AG04449 (cell line): ENCODE measurements at regions of chr3 and their contacts with region 1.

Region 1: GRCh38 chr3:172666873-172667694 is 43.8 kb downstream of the NCEH1 start:
- DNase-seq: no peak
- H3K4me3 ChIP-seq: no peak overlapping the region
- CTCF ChIP-seq: peak; percentile 71

Region 2: DNA sequence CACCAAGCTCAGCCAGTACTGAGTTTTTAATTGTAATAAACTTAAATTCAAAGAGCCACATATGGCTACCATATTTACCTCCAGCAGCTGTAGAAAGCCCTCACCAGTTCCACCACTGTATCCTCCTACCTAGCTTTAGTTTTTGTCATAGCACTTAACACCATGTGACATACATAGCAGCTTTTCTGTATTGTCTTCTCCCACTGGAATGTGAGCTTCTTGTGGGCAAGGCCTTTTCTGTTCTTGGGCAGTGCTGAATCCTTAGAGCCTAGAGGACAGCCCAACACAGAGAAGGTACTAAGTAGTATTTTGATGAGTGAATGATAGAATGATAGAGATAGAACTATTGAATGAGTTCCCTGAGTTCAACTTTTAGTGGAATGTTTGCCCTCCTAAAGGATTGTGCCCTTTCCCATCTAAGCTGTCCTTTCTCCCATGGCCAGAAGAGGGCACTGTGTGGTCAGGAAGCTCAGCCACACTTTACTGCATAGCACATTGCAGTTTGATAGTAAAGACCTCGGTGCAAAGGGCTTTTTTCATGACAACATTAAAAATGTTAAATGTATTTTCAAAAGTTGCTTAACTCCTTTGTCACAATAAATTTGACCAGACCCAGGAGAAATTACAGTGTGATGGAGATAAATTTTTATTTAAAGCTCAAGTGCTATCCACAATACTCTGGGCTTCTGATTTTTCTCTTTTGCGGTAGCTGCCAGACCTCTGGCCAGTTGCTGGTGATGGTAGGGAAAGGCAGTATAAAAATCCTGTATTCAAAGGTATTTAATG is 334.6 kb before region 1 on chr3:
- CTCF ChIA-PET with region 1: interaction called, 35 read pairs
- POLR2A ChIA-PET with region 1: no interaction called
- DNase-seq: no peak
- H3K4me3 ChIP-seq: no peak overlapping the region
- CTCF ChIP-seq: peak; percentile 89

Region 3: GRCh38 chr3:172355839-172356238 is 311.2 kb before region 1 on chr3:
- CTCF ChIA-PET with region 1: interaction called, 23 read pairs
- POLR2A ChIA-PET with region 1: no interaction called
- DNase-seq: peak; percentile 76
- H3K4me3 ChIP-seq: no peak overlapping the region
- CTCF ChIP-seq: no peak

Region 4: DNA sequence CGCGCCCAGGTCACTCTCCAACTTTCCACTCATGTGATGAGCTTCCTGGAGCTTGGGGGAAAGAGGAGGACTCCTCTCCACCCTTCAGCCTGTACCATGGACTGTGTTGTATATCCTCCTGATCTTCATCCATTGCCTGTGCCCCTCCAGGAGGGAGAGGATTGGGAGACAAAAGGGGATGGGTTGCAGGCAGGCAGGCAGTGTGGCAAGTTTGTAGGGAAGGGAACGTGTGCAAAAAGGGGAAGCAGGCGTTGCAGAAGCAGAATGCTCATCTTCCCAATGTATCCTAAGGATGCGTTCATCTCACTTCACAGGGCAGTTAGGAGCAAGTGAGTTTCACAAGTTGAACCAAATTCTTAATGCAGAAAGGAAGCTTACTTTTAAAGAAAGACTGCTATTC is 190.7 kb before region 1 on chr3:
- CTCF ChIA-PET with region 1: interaction called, 12 read pairs
- POLR2A ChIA-PET with region 1: no interaction called
- DNase-seq: no peak
- H3K4me3 ChIP-seq: no peak overlapping the region
- CTCF ChIP-seq: no peak

Region 5: DNA sequence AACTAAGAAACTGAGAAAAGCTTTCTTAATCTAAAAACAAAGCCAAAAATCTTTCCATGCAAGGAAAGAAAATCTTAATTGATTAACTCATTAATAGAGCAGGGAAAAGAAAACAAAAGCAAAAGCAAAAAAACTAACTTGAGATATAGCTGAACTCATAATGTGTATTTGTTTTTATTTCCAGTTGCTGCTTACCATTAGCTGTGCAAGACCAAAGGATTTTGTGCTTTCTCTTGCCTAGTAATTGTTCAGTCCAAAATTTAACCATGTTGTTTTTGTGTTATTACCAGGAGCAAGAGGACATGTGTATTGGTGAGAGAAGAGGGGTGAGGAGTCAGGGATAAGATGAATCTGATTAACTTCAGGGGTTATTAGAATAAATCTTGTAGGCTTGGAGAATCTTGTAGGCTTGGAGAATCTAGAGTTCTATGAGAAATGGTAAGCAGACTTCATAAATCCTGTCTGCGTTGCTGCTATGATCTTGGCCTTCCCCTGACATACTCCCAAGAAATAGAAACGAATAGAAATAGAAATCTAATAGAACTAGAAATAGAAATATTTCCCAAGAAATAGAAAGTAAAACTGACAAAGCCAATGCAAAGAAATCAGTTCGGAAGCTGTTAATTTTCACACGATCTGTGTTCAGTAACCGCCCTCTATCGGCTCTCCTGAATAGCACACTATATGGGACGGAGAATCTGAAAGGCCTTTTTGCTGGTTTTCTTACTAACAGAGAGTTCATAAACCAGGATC is 71.3 kb before region 1 on chr3:
- CTCF ChIA-PET with region 1: interaction called, 20 read pairs
- POLR2A ChIA-PET with region 1: no interaction called
- DNase-seq: no peak
- H3K4me3 ChIP-seq: no peak overlapping the region; the same call in 1 of the 2 replicates
- CTCF ChIP-seq: peak; percentile 62

Region 6: GRCh38 chr3:172635588-172635987 is 31.5 kb before region 1 on chr3:
- CTCF ChIA-PET with region 1: interaction called, 16 read pairs
- POLR2A ChIA-PET with region 1: no interaction called
- DNase-seq: no peak
- H3K4me3 ChIP-seq: no peak overlapping the region
- CTCF ChIP-seq: no peak

Region 7: DNA sequence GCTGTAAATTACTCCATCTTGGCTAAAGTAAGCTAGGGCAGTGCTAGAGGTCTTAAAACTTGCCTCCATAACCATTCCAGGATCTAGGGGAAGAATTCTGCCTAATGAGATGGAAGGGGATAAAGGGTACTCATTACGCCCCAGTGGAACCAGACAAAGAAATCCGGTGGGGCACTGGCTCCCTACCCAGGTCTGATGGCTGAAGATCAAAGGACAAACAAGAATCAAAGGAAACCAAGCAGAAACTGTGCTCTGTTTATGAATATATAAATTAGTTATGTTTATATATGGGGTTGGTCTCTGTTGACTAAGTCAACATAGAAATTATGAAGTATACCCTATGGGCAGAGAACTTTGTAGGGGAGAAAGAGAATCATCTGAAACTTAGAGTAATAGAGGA is 14.0 kb before region 1 on chr3:
- CTCF ChIA-PET with region 1: interaction called, 27 read pairs
- POLR2A ChIA-PET with region 1: no interaction called
- DNase-seq: no peak
- H3K4me3 ChIP-seq: no peak overlapping the region
- CTCF ChIP-seq: no peak

Region 8: GRCh38 chr3:172787746-172788145 is 120.7 kb after region 1 on chr3:
- CTCF ChIA-PET with region 1: no interaction called
- POLR2A ChIA-PET with region 1: no interaction called
- DNase-seq: peak; percentile 16
- H3K4me3 ChIP-seq: no peak overlapping the region
- CTCF ChIP-seq: no peak

Region 9: GRCh38 chr3:172799251-172799650 is 132.2 kb after region 1 on chr3:
- CTCF ChIA-PET with region 1: no interaction called
- POLR2A ChIA-PET with region 1: no interaction called
- DNase-seq: no peak
- H3K4me3 ChIP-seq: no peak overlapping the region
- CTCF ChIP-seq: no peak